MCF 10A (cell line): ENCODE measurements at regions of chr1 and their contacts with region 1.

Region 1: GRCh38 chr1:225746361-225747179 is 31.1 kb upstream of the SRP9 start:
- DNase-seq: peak; percentile 98
- H3K4me3 Mint-ChIP-seq: peak overlapping the region; percentile 66
- H3K27ac Mint-ChIP-seq: peak overlapping the region; percentile 90
- H3K4me1 Mint-ChIP-seq: peaks cover 35% of the 10 kb centered on the region
- H3K27me3 Mint-ChIP-seq: no peaks in the 10 kb centered on the region
- CTCF ChIP-seq: no peak

Region 2: DNA sequence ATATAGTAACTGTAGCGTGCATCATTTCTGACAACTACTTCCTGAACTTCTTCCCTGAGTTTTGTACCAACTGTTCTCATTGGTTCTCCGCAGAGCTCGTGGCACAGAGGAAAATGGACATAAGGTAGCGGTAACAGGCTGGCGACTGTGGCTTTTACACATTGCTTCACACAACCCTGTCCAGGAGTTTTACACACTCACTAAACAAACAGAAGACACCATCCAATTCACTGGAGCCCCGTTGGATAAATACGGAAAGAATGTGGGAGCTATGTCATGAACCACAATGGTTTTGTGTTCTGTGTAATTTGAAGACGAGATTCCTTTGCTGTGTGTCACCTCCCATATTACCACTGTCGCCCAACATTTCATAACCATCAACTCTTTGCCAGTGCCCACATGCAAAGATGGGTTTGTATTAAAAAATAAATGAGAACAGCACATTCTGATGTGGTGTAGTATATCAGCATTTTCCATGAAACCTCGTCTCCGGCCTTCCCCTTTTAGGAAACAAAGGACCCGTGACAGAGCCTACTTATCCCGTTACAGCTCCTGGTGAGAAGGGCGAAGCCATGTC is 46.3 kb before region 1 on chr1:
- CTCF ChIA-PET with region 1: interaction called, 5 read pairs
- POLR2A ChIA-PET with region 1: interaction called, 23 read pairs
- intact Hi-C with region 1: no loop called
- DNase-seq: peak; percentile 100
- H3K4me3 Mint-ChIP-seq: peak overlapping the region; percentile 68
- H3K27ac Mint-ChIP-seq: peak overlapping the region; percentile 94
- H3K4me1 Mint-ChIP-seq: peaks cover 26% of the 10 kb centered on the region
- H3K27me3 Mint-ChIP-seq: no peaks in the 10 kb centered on the region
- CTCF ChIP-seq: no peak

Region 3: DNA sequence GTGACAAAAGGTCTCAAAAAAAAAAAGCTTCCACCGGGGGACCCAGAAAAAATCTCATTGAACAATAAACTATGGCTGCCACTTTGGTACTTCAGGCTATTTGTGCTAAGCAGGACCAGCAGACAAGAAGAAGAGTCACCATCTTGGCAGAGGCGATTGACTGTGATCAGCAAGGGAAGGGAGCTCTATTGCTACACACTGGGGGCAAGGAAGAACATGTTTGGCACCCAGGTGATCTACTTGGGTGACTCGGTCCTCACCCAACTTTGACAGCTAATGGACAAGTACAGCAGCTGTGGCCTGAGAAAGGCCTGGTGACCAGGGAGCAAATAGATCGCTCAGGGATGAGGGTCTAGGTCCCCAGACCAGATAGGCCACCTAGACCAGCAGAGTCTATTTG is 22.3 kb before region 1 on chr1:
- CTCF ChIA-PET with region 1: interaction called, 4 read pairs
- POLR2A ChIA-PET with region 1: interaction called, 10 read pairs
- intact Hi-C with region 1: no loop called
- DNase-seq: no peak
- H3K4me3 Mint-ChIP-seq: no peak overlapping the region
- H3K27ac Mint-ChIP-seq: no peak overlapping the region
- H3K4me1 Mint-ChIP-seq: no peaks in the 10 kb centered on the region
- H3K27me3 Mint-ChIP-seq: no peaks in the 10 kb centered on the region
- CTCF ChIP-seq: no peak